ENCODE measurements at regions of chr21 and their contacts with region 1.

Region 1: GRCh38 chr21:26170471-26171257 is at the start of gene APP:
- DNase-seq: peak; percentile 95
- total RNA-seq, gene APP: 334 TPM

Region 2: GRCh38 chr21:25881525-25882376 is 288.9 kb before region 1 on chr21:
- intact Hi-C with region 1: loop called (anchors 5 kb)
- DNase-seq: peak; percentile 82

Region 3: GRCh38 chr21:25895565-25896205 is 275.0 kb before region 1 on chr21:
- intact Hi-C with region 1: loop called (anchors 1 kb)
- DNase-seq: no peak

Region 4: GRCh38 chr21:25997788-25998611 is 172.7 kb before region 1 on chr21:
- intact Hi-C with region 1: loop called (anchors 10 kb)
- DNase-seq: no peak

Region 5: GRCh38 chr21:26070822-26071425 is 99.7 kb before region 1 on chr21:
- intact Hi-C with region 1: loop called (anchors 5 kb)
- DNase-seq: no peak

Region 6: GRCh38 chr21:26116456-26117011 is 54.1 kb before region 1 on chr21:
- intact Hi-C with region 1: loop called (anchors 5 kb)
- DNase-seq: no peak

Region 7: GRCh38 chr21:26715878-26716506 is 545.3 kb after region 1 on chr21:
- intact Hi-C with region 1: loop called (anchors 10 kb)
- DNase-seq: no peak

Measured in cardiac septum (tissue), 1 donor.